AG04449 (cell line): ENCODE measurements at regions of chr17 and their contacts with region 1.

Region 1: GRCh38 chr17:7329374-7329996 is 350 bp upstream of the NEURL4 start:
- DNase-seq: peak; percentile 96
- H3K4me3 ChIP-seq: peak overlapping the region; percentile 96
- CTCF ChIP-seq: no peak

Region 2: GRCh38 chr17:7280519-7281429 is 48.7 kb before region 1 on chr17:
- CTCF ChIA-PET with region 1: interaction called, 10 read pairs
- POLR2A ChIA-PET with region 1: no interaction called
- DNase-seq: no peak
- H3K4me3 ChIP-seq: peak overlapping the region; percentile 52
- CTCF ChIP-seq: peak; percentile 96

Region 3: GRCh38 chr17:7314719-7315569 is 14.5 kb before region 1 on chr17 and contains the start of gene GPS2:
- CTCF ChIA-PET with region 1: interaction called, 39 read pairs
- POLR2A ChIA-PET with region 1: interaction called, 18 read pairs
- DNase-seq: no peak
- H3K4me3 ChIP-seq: peak within 1 kb of the TSS; percentile 81
- CTCF ChIP-seq: no peak

Region 4: DNA sequence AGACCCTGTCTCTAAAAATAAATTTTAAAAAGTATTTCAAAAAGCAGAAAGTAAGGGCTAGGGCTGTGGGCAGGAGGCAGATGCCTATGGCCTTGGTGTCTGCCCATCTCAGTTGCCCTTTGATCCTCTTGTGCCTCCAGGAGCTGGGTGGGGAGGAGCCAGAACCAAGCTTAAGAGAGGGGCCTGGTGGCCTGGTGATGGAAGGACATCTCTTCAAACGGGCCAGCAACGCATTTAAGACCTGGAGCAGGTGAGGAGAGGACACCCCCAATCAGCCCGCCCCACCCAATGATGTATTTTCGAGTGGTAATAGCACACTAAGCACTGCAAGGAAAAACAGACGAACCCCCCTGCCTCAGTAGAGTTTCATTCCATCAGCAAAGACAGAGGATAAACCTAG is 14.9 kb after region 1 on chr17:
- CTCF ChIA-PET with region 1: interaction called, 34 read pairs
- POLR2A ChIA-PET with region 1: interaction called, 20 read pairs
- DNase-seq: no peak
- H3K4me3 ChIP-seq: no peak overlapping the region
- CTCF ChIP-seq: no peak

Region 5: DNA sequence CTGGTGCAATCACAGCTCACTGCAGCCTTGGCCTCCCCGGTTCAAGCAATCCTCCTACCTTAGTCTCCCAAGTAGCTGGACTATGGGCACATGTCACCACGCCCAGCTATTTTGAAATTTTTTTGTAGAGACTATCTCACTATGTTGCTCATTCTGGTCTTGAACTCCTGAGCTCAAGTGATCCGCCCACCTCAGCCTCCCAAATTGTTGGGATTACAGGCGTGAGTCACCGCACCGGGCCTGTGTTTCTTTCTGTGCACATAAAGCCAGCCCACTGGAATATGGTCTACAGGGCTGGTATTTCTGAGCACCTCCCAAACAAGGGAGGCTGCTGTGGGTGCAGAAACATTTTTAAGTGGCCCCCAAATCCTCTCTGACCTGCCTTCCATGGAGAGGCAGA is 33.8 kb after region 1 on chr17:
- CTCF ChIA-PET with region 1: no interaction called
- POLR2A ChIA-PET with region 1: no interaction called
- DNase-seq: no peak
- H3K4me3 ChIP-seq: no peak overlapping the region
- CTCF ChIP-seq: no peak